CD8-positive, alpha-beta memory T cell (primary cell): ENCODE measurements at regions of chr11 and their contacts with region 1.

Region 1: DNA sequence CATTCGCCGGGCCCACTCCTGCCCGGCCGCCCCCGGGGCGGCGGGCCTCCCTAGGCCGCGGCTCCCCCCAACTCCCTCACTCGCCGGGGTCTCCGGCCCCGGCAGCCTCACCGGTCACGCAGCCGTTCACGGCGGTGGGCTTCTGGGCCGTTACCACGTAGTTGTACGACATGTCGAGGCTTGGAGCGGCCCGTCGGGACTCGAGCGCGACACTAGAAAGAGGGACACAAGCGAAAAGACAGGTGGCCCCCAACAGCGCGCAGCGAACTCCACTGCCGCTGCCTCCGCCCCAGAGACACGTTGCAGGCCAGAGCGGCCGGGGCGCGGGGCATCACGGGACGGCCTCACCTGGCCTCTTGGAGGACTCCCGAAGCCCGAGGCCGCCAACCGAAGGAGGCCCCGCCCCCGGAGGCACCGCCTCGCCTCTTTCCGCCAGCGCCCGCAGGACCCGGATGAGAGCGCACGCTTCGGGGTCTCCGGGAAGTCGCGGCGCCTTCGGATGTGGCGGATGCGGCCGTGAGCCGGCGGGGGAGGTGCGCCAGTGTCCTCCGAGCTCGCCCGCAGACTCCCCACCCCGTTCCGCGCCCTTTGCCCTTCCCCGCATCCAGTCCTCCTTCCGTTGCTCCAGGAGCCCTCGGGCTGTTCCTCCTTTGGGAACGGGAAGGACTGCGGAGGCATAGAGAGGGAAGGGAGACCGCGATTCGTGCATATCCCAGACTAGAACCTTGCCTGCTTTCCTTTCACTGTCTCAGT is at the starts of genes DDB1 and TKFC:
- DNase-seq: peak; percentile 96 to 99 (median 97)
- H3K4me3 ChIP-seq: peak within 1 kb of the TSS; percentile 91
- H3K4me3 Mint-ChIP-seq: peak within 1 kb of the TSS; percentile 92 to 98 (median 95)
- H3K27ac ChIP-seq: peak within 1 kb of the TSS; percentile 94
- H3K27ac Mint-ChIP-seq: peak within 1 kb of the TSS; percentile 96 to 100 (median 98)
- H3K4me1 ChIP-seq: peaks cover 39% of the 10 kb centered on the region
- H3K4me1 Mint-ChIP-seq: peaks cover 53 to 71% (median 58%) of the 10 kb centered on the region in 3 donors
- H3K27me3 ChIP-seq: no peaks in the 10 kb centered on the region
- H3K27me3 Mint-ChIP-seq: peaks cover 0 to 3% of the 10 kb centered on the region in 2 donors
- total RNA-seq, gene DDB1: 302 to 307 TPM
- total RNA-seq, gene TKFC: 66.8 to 72.4 TPM

Region 2: DNA sequence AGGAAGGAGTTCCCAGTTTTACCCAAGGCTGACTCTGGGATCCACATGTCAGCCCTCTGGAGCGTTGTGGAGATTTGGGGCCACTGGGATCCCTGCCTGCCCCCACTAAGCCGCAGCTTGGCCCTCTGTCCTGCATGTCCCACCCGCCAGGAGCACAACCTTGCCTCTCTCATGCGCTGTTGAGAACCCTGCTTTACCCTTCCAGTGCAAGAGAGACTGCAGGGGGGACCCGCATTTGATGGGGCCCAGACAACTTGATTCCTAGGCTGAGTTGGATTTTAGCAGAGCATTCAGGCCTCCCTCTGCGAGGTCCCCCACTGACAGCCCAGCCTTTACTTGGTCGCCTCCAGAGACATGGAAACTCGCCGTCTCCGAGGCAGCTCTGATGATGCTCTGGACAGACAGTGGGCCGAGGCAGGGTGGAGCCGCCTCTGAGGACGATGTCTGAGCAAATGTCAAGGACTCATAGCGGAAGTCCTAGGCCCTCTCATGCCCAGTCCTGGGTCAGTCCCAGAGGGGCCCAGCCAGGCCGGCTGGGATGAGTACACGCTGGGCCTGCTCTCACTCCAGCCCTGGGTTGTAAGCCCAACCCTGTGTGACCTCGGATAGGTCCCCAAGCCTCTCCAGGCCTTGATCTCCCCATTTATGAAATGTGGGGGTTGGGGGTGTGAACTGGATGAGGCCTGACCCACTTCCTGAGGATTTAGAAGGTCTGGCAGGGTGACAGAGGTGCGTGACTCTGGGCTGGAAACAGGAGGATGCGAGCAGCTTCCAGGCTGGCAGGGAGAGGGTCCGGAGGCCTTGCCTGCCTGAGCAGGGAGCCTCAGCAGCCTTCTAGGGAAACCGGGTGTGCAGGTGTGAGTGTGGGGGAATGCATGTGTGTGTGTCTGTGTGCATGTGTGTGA is 230.1 kb before region 1 on chr11:
- CTCF ChIA-PET with region 1: no interaction called
- POLR2A ChIA-PET with region 1: no interaction called
- DNase-seq: peak in 4 of 5 donors; percentile 16 to 61 (median 56)
- H3K4me3 ChIP-seq: peak overlapping the region; percentile 81
- H3K4me3 Mint-ChIP-seq: no peak overlapping the region
- H3K27ac ChIP-seq: peak overlapping the region; percentile 95
- H3K27ac Mint-ChIP-seq: no peak overlapping the region
- H3K4me1 ChIP-seq: peaks cover 54% of the 10 kb centered on the region
- H3K4me1 Mint-ChIP-seq: peaks cover 35 to 48% (median 45%) of the 10 kb centered on the region in 3 donors
- H3K27me3 ChIP-seq: no peaks in the 10 kb centered on the region
- H3K27me3 Mint-ChIP-seq: no peaks in the 10 kb centered on the region

Region 3: DNA sequence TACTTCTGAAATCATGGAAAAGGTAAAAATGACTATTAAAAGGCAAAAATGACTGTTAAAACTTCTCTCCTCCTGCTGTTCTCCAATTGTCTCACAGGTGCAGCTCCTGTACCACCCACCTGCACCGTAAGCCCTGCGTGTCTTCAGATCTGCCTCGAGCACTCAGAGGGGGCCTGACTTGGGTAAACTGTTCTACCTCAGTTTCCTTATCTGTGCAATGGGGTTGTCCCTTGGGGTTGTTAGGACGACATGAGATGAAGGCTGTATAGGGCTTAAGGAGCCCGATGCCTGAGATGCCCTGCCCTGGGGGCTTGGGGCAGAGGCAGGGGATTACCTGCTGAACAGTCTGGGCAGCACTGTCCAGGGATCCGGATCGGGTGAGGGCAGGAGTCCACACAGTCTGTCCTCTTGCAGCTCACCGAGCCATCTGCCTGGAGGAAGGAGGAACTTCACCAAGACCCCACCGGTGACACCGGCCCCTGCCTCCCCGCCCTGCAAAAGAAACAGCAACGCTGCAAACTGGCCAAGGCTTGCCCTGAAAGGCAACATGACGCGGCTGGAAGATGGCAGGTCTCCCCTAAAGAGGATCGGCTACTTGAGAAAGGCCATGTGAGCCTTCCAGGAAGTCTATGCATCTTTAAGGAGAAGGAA is 64.3 kb before region 1 on chr11:
- CTCF ChIA-PET with region 1: no interaction called
- POLR2A ChIA-PET with region 1: no interaction called
- DNase-seq: no peak
- H3K4me3 ChIP-seq: no peak overlapping the region
- H3K4me3 Mint-ChIP-seq: no peak overlapping the region
- H3K27ac ChIP-seq: no peak overlapping the region
- H3K27ac Mint-ChIP-seq: no peak overlapping the region
- H3K4me1 ChIP-seq: no peaks in the 10 kb centered on the region
- H3K4me1 Mint-ChIP-seq: no peaks in the 10 kb centered on the region
- H3K27me3 ChIP-seq: no peaks in the 10 kb centered on the region
- H3K27me3 Mint-ChIP-seq: peaks cover 0 to under 1% of the 10 kb centered on the region in 2 donors

Region 4: GRCh38 chr11:61347916-61348461 is 15.0 kb after region 1 on chr11:
- CTCF ChIA-PET with region 1: interaction called, 10 read pairs
- POLR2A ChIA-PET with region 1: interaction called, 3 read pairs
- DNase-seq: no peak
- H3K4me3 ChIP-seq: no peak overlapping the region
- H3K4me3 Mint-ChIP-seq: no peak overlapping the region
- H3K27ac ChIP-seq: no peak overlapping the region
- H3K27ac Mint-ChIP-seq: no peak overlapping the region
- H3K4me1 ChIP-seq: no peaks in the 10 kb centered on the region
- H3K4me1 Mint-ChIP-seq: peaks cover 0 to 2% (median 0%) of the 10 kb centered on the region in 3 donors
- H3K27me3 ChIP-seq: no peaks in the 10 kb centered on the region
- H3K27me3 Mint-ChIP-seq: no peaks in the 10 kb centered on the region

Region 5: DNA sequence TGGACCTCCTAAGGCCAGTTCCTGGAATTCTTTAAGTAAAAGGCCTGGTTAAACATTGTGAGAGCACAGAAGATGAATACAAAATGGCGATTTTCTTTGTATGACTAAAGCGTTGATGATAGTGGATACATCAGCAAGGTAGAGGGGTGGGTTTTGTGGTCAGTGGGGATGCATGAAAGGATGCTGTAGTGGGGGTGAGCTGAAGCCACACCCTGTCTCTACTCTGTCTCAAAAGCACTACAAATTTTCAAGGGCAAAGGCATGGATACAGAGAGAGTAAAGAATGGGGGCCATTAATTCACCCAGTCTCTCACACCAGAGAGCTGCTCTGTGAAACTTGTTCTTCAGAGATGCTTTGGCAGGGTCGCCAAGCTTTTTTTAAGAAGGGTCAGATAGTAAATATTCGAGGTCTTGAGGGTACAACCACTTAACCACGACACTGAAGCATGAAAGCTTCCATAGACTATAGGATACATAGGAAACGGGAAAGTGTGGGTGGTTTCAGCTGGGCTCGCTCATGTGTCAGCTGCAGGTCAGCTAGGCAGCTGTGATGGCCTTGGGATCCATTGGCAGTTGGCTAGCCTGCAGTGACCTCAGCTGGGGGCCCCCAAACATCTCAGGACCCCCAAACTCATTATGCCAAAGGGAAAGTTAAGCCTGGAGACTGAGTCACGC is 37.5 kb after region 1 on chr11:
- CTCF ChIA-PET with region 1: interaction called, 15 read pairs
- POLR2A ChIA-PET with region 1: no interaction called
- DNase-seq: no peak
- H3K4me3 ChIP-seq: no peak overlapping the region
- H3K4me3 Mint-ChIP-seq: no peak overlapping the region
- H3K27ac ChIP-seq: no peak overlapping the region
- H3K27ac Mint-ChIP-seq: peak overlapping the region in 3 of 8 donors; percentile 1 to 61 (median 14)
- H3K4me1 ChIP-seq: no peaks in the 10 kb centered on the region
- H3K4me1 Mint-ChIP-seq: no peaks in the 10 kb centered on the region
- H3K27me3 ChIP-seq: no peaks in the 10 kb centered on the region
- H3K27me3 Mint-ChIP-seq: no peaks in the 10 kb centered on the region

Region 6: GRCh38 chr11:61392981-61393595 is 60.1 kb after region 1 on chr11:
- CTCF ChIA-PET with region 1: interaction called, 159 read pairs
- POLR2A ChIA-PET with region 1: interaction called, 13 read pairs
- DNase-seq: peak in 1 of 5 donors; percentile 41
- H3K4me3 ChIP-seq: peak overlapping the region; percentile 76
- H3K4me3 Mint-ChIP-seq: peak overlapping the region; percentile 91 to 97 (median 95)
- H3K27ac ChIP-seq: peak overlapping the region; percentile 67
- H3K27ac Mint-ChIP-seq: peak overlapping the region; percentile 92 to 100 (median 98)
- H3K4me1 ChIP-seq: peaks cover 21% of the 10 kb centered on the region
- H3K4me1 Mint-ChIP-seq: peaks cover 19 to 30% (median 23%) of the 10 kb centered on the region in 3 donors
- H3K27me3 ChIP-seq: no peaks in the 10 kb centered on the region
- H3K27me3 Mint-ChIP-seq: no peaks in the 10 kb centered on the region

Region 7: GRCh38 chr11:61516675-61517572 is 184.0 kb after region 1 on chr11:
- CTCF ChIA-PET with region 1: interaction called, 14 read pairs
- POLR2A ChIA-PET with region 1: no interaction called
- DNase-seq: peak; percentile 41 to 68 (median 50)
- H3K4me3 ChIP-seq: peak overlapping the region; percentile 61
- H3K4me3 Mint-ChIP-seq: peak overlapping the region in 6 of 7 donors; percentile 47 to 72 (median 63)
- H3K27ac ChIP-seq: no peak overlapping the region
- H3K27ac Mint-ChIP-seq: peak overlapping the region in 2 of 8 donors; percentile 57 to 68
- H3K4me1 ChIP-seq: peaks cover 9% of the 10 kb centered on the region
- H3K4me1 Mint-ChIP-seq: peaks cover 6 to 12% (median 7%) of the 10 kb centered on the region in 3 donors
- H3K27me3 ChIP-seq: peaks cover 11% of the 10 kb centered on the region
- H3K27me3 Mint-ChIP-seq: peaks cover 14 to 32% of the 10 kb centered on the region in 2 donors